ENCODE measurements at regions of chr5 and their contacts with region 1.

Region 1: GRCh38 chr5:117863586-117864296 is 1124.6 kb downstream of the DTWD2 start:
- DNase-seq: no peak

Region 2: DNA sequence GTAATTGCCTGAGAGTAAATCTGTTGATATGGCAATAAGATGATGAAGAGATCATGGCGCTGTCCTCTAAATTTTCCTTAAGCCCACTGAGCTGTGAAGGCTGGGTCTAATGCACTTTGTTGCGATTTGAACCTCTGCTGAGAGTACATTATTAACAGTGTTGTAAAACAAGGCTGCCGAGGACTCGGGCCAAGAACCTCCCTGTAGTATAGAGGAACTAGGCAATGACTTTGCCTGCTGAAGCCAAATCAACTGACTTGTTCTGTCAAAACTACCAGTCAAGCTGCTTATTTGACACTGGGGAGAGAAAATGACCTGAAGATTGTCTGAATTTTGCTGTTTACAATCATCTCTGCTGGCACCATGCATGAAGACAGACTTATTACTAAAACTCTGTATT is 30.1 kb before region 1 on chr5:
- intact Hi-C with region 1: loop called in 1 of 2 experiments (anchors 1 kb)
- DNase-seq: no peak

Region 3: DNA sequence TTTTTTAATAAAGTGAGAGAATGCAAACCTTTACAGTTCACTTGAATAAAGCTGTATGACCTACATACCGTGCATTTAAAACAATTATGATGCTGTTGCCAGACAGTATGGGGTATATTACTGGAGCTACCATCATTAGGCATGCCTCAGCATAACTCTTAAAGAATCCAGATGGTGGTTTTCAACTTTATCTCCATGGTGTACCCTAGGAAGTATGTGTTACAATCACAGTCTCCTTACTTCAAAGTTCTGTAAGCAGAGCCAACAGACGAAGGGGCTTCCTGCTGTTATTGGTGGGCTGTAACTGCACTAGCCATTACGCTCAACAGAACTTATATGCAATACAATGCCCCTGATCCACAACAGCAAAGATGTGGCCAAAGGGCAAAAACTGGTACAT is 321.3 kb after region 1 on chr5:
- intact Hi-C with region 1: no loop called
- DNase-seq: no peak

Measured in posterior vena cava (tissue), 2 donors.